ENCODE measurements at regions of chr3 and their contacts with region 1.

Region 1: GRCh38 chr3:108834551-108834950 is 12.0 kb downstream of the TRAT1 start:
- DNase-seq: no peak
- H3K4me3 ChIP-seq: no peak overlapping the region
- CTCF ChIP-seq: no peak
- POLR2A ChIP-seq: no peak

Region 2: DNA sequence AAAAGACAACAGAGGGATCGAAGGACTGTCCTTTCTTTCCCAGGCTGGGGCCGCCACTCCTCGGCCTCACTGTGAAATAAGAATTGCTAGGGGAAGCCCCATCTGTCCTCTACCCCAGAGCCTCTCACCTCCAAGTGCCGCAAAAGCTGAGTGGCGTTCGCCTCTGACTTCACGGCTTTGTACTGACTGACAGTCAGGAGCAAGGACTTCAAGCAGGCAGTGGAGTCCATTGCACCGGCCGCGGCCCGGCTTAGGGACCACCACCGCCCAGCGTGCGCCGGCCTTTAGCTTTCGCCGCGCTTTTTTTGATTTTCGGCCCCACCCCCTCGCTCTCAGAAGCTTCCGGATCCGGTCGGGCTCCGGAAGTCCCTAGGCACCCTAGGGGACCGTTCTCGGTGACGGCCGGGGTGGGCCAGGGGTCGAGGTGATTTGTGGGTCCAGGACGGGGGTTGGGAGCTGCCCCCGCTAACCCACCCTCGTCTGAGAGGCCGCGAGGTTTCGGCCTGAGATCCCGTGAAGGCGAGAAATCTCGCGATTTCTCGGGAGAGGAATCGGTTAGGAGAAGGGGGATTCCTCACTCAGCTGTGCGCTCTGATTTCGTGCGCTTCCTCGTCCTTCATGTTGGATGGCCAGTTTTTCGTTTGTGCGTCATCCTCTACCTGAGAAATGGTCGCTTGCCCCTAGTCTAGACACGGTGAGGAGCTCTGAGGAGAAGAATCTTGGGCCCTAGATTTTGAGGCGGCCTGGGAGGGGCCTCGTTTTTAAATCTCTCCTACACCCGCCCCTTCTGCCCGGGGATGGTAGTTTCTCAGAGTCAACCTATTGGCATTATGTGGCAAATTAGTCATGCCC is 245.2 kb before region 1 on chr3 and contains the starts of genes CIP2A and DZIP3:
- intact Hi-C with region 1: loop called (anchors 5 kb)
- DNase-seq: peak; percentile 65 to 94
- H3K4me3 ChIP-seq: peak within 1 kb of the TSS; percentile 73
- CTCF ChIP-seq: no peak
- POLR2A ChIP-seq: no peak
- total RNA-seq, gene CIP2A: 0.84 to 2.2 (median 1.3) TPM
- total RNA-seq, gene DZIP3: 2.0 to 4.5 (median 2.8) TPM

Measured in lower leg skin (tissue), 4 donors.